Thyroid gland (tissue), 4 donors: ENCODE measurements at regions of chr2 and their contacts with region 1.

Region 1: DNA sequence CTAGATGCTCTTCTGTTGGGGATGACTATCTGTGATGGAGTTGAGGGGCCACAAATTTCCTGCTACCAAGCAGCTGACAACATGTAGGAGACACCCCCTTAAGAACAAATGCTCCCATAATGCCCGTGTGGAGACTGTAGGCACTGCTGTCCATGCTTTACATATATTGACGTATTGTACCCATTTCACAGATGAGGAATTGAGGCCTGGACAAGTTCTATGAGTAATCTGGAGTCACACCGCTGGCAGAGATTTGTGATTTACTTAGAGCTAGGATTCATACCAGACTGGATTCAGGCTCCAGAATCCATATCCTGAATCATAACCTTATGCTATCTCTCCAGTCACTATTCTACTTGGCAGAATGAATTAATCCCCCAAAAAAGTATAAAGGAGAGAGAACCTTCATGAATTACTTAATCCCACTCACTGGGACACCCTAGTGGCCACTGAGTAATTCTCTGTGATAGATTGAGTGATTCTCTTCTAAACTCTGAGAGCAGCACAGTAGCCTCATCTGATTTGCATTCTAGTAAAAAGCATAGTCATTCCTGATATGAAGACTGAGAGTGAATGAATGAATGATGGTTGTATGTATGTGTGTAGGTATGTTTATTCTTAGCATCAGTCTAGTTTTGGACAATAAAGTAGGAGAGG is 460.7 kb upstream of the MEIS1 start:
- DNase-seq: no peak
- H3K4me3 ChIP-seq: no peak overlapping the region
- H3K27ac ChIP-seq: no peak overlapping the region
- H3K4me1 ChIP-seq: no peaks in the 10 kb centered on the region
- H3K27me3 ChIP-seq: no peaks in the 10 kb centered on the region
- CTCF ChIP-seq: peak in 1 of 6 experiments; percentile 6
- POLR2A ChIP-seq: no peak

Region 2: DNA sequence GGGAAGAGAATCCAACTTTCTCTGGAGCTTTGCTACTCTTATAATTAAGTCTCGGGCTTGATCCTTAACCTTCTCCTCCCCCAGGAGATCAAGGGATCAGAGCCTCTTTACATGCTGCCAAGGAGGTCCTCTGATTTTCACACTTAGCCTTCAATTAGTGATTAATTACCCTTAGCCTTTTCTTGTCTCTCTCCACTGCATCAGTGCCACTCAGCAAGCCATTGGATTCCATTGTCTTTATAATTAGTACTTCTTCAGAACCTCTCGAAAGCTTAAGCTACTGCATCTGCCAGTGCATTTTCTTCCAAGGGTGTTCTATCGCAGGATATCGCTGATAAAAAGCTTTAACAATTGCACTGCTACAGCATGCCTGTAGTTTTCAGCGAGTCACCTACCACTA is 16.3 kb before region 1 on chr2:
- intact Hi-C with region 1: loop called (anchors 2 kb)
- DNase-seq: no peak
- H3K4me3 ChIP-seq: no peak overlapping the region
- H3K27ac ChIP-seq: no peak overlapping the region
- H3K4me1 ChIP-seq: peaks cover 0 to 4% of the 10 kb centered on the region in 2 donors
- H3K27me3 ChIP-seq: no peaks in the 10 kb centered on the region
- CTCF ChIP-seq: no peak
- POLR2A ChIP-seq: no peak